Activated CD8-positive, alpha-beta T cell treated with anti-CD3 and anti-CD28 coated beads for 36 hours (primary cell): ENCODE measurements at regions of chr7 and their contacts with region 1.

Region 1: GRCh38 chr7:74094224-74095101 is 10.9 kb downstream of the LIMK1 start:
- DNase-seq: peak; percentile 94
- ATAC-seq: peak; percentile 89
- H3K4me3 Mint-ChIP-seq: peak overlapping the region; percentile 76
- H3K27ac Mint-ChIP-seq: peak overlapping the region; percentile 98
- H3K4me1 Mint-ChIP-seq: peaks cover 28% of the 10 kb centered on the region
- H3K27me3 Mint-ChIP-seq: no peaks in the 10 kb centered on the region
- CTCF ChIP-seq: no peak

Region 2: GRCh38 chr7:74083117-74083876 is 11.2 kb before region 1 on chr7 and contains the start of gene LIMK1:
- CTCF ChIA-PET with region 1: interaction called, 3 read pairs
- POLR2A ChIA-PET with region 1: interaction called, 33 read pairs
- intact Hi-C with region 1: no loop called
- DNase-seq: peak; percentile 80
- ATAC-seq: peak; percentile 95
- H3K4me3 Mint-ChIP-seq: peak within 1 kb of the TSS; percentile 83
- H3K27ac Mint-ChIP-seq: peak within 1 kb of the TSS; percentile 86
- H3K4me1 Mint-ChIP-seq: peaks cover 8% of the 10 kb centered on the region
- H3K27me3 Mint-ChIP-seq: no peaks in the 10 kb centered on the region
- CTCF ChIP-seq: no peak
- total RNA-seq, gene LIMK1: 17.8 to 20.8 TPM